Head of caudate nucleus (tissue), 42 donors: ENCODE measurements at regions of chr5 and their contacts with region 1.

Region 1: GRCh38 chr5:159262859-159263567 is at the start of gene UBLCP1:
- DNase-seq: peak; percentile 53 to 91 (median 80)

Region 2: GRCh38 chr5:159178978-159179377 is 84.0 kb before region 1 on chr5:
- intact Hi-C with region 1: no loop called
- DNase-seq: no peak

Region 3: GRCh38 chr5:159209438-159210305 is 53.3 kb before region 1 on chr5 and contains the start of gene RNF145:
- intact Hi-C with region 1: loop called (anchors 2 kb)
- DNase-seq: peak; percentile 68 to 94 (median 84)